Prostate gland (tissue), 2 donors: ENCODE measurements at regions of chr10 and their contacts with region 1.

Region 1: GRCh38 chr10:33271973-33272583 is 62.4 kb downstream of the NRP1 start:
- DNase-seq: no peak
- H3K4me3 ChIP-seq: no peak overlapping the region
- H3K27ac ChIP-seq: no peak overlapping the region
- H3K4me1 ChIP-seq: peaks cover 4% of the 10 kb centered on the region
- H3K27me3 ChIP-seq: no peaks in the 10 kb centered on the region
- CTCF ChIP-seq: no peak
- POLR2A ChIP-seq: no peak

Region 2: DNA sequence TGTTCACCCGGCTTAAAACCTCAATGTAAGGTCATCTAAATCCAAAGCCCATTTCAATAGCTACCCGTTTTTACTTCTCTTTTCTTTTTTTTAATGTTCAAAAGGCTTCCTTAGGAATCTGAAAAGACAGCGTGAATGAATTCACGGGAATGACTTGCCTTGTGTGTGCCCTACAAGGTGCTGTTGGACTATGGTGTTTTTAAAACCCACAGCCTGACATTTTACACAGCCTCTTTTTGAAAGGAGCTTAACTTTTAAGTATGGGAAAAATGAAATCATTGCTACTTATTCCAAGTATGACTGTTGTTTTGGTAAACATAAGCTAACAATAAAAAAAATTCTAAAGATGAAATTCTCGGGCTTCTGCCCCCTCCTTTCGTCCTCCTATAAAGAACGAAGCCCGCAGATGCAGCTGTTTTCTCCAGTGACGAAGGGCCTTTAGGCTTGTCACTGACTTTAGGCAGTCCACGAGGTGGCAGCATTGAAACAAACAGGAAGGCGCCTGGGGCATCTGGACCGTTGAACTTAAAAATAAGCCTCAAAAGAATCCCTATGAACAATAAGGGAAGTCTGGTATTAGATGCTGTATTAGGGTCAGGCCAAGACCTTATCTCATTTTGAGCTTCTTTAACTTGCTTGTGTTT is 78.9 kb before region 1 on chr10:
- intact Hi-C with region 1: loop called (anchors 2 kb)
- DNase-seq: peak; percentile 83
- H3K4me3 ChIP-seq: no peak overlapping the region
- H3K27ac ChIP-seq: peak overlapping the region; percentile 1 to 45
- H3K4me1 ChIP-seq: peaks cover 7% of the 10 kb centered on the region
- H3K27me3 ChIP-seq: no peaks in the 10 kb centered on the region
- CTCF ChIP-seq: peak; percentile 57 to 77 (median 75)
- POLR2A ChIP-seq: no peak

Region 3: GRCh38 chr10:33521062-33521461 is 249.0 kb after region 1 on chr10:
- intact Hi-C with region 1: no loop called
- DNase-seq: peak; percentile 22
- H3K4me3 ChIP-seq: no peak overlapping the region
- H3K27ac ChIP-seq: no peak overlapping the region
- H3K4me1 ChIP-seq: no peaks in the 10 kb centered on the region
- H3K27me3 ChIP-seq: no peaks in the 10 kb centered on the region
- CTCF ChIP-seq: peak in 1 of 4 experiments; percentile 8
- POLR2A ChIP-seq: no peak